ENCODE measurements at regions of chr5 and their contacts with region 1.

Region 1: GRCh38 chr5:150217873-150218692 is 28.2 kb downstream of the SLC6A7 start:
- DNase-seq: peak; percentile 76 to 92
- H3K4me3 ChIP-seq: no peak overlapping the region
- H3K27ac ChIP-seq: no peak overlapping the region
- H3K4me1 ChIP-seq: peaks cover 0 to 24% (median 15%) of the 10 kb centered on the region in 4 donors
- H3K27me3 ChIP-seq: no peaks in the 10 kb centered on the region
- CTCF ChIP-seq: peak; percentile 89 to 98

Region 2: GRCh38 chr5:150000256-150000989 is 217.7 kb before region 1 on chr5 and contains the starts of genes HMGXB3 and TIGD6:
- intact Hi-C with region 1: loop called (anchors 5 kb)
- DNase-seq: peak; percentile 93 to 96
- H3K4me3 ChIP-seq: peak within 1 kb of the TSS; percentile 67 to 99
- H3K27ac ChIP-seq: peak within 1 kb of the TSS; percentile 87 to 96
- H3K4me1 ChIP-seq: peaks cover 0 to 40% (median 29%) of the 10 kb centered on the region in 4 donors
- H3K27me3 ChIP-seq: no peaks in the 10 kb centered on the region
- CTCF ChIP-seq: no peak

Region 3: GRCh38 chr5:150129813-150130492 is 88.1 kb before region 1 on chr5:
- intact Hi-C with region 1: loop called (anchors 2 kb)
- DNase-seq: peak; percentile 82 to 90
- H3K4me3 ChIP-seq: no peak overlapping the region
- H3K27ac ChIP-seq: peak overlapping the region; percentile 89 to 98
- H3K4me1 ChIP-seq: peaks cover 0 to 57% (median 53%) of the 10 kb centered on the region in 4 donors
- H3K27me3 ChIP-seq: no peaks in the 10 kb centered on the region
- CTCF ChIP-seq: peak; percentile 94 to 97

Measured in tibial artery (tissue), 4 donors.